Naive thymus-derived CD4-positive, alpha-beta T cell (primary cell): ENCODE measurements at regions of chr7 and their contacts with region 1.

Region 1: GRCh38 chr7:149125863-149126661 is at the start of gene ZNF425:
- DNase-seq: peak; percentile 87 to 98 (median 92)
- ATAC-seq: peak; percentile 98
- H3K4me3 ChIP-seq: peak within 1 kb of the TSS; percentile 99
- H3K4me3 Mint-ChIP-seq: peak within 1 kb of the TSS; percentile 91 to 100 (median 100)
- H3K27ac ChIP-seq: peak within 1 kb of the TSS; percentile 91
- H3K27ac Mint-ChIP-seq: peak within 1 kb of the TSS; percentile 90 to 100 (median 98)
- H3K4me1 ChIP-seq: no peaks in the 10 kb centered on the region
- H3K4me1 Mint-ChIP-seq: peaks cover 19 to 28% (median 22%) of the 10 kb centered on the region in 7 donors
- H3K27me3 ChIP-seq: no peaks in the 10 kb centered on the region
- H3K27me3 Mint-ChIP-seq: no peaks in the 10 kb centered on the region
- total RNA-seq, gene ZNF425: 0.61 to 4.9 (median 1.0) TPM

Region 2: DNA sequence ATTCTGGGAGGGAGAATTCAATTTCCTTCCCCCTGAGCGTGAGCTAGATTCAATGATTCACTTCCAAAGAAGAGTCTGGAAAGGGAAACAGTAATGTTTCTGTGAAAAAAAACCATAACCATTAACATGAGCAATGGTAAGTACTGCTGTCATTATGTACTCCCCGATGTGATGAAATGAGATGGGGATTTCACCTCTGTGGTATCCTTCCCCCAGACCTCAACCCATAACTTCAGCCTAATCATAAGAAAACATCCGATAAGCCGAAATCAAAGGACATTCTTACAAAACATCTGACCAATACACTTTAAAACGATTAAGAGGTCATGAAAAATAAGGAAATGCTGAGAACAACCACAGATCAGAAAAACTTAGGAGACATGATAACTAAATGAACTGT is 269.2 kb before region 1 on chr7:
- CTCF ChIA-PET with region 1: no interaction called
- POLR2A ChIA-PET with region 1: no interaction called
- intact Hi-C with region 1: no loop called
- DNase-seq: no peak
- ATAC-seq: peak; percentile 57
- H3K4me3 ChIP-seq: no peak overlapping the region
- H3K4me3 Mint-ChIP-seq: peak overlapping the region in 1 of 10 donors; percentile 60
- H3K27ac ChIP-seq: no peak overlapping the region
- H3K27ac Mint-ChIP-seq: peak overlapping the region in 1 of 9 donors; percentile 63
- H3K4me1 ChIP-seq: peaks cover 3 to 5% of the 10 kb centered on the region in 2 donors
- H3K4me1 Mint-ChIP-seq: peaks cover 8 to 45% (median 15%) of the 10 kb centered on the region in 7 donors
- H3K27me3 ChIP-seq: no peaks in the 10 kb centered on the region
- H3K27me3 Mint-ChIP-seq: no peaks in the 10 kb centered on the region

Region 3: GRCh38 chr7:148884299-148885022 is 241.6 kb before region 1 on chr7:
- CTCF ChIA-PET with region 1: no interaction called
- POLR2A ChIA-PET with region 1: interaction called, 3 read pairs
- intact Hi-C with region 1: loop called in 1 of 2 experiments (anchors 5 kb)
- DNase-seq: peak; percentile 89 to 96 (median 94)
- ATAC-seq: peak; percentile 94
- H3K4me3 ChIP-seq: peak overlapping the region; percentile 57
- H3K4me3 Mint-ChIP-seq: peak overlapping the region; percentile 85 to 98 (median 94)
- H3K27ac ChIP-seq: peak overlapping the region; percentile 97
- H3K27ac Mint-ChIP-seq: peak overlapping the region; percentile 89 to 98 (median 93)
- H3K4me1 ChIP-seq: peaks cover 6 to 7% of the 10 kb centered on the region in 2 donors
- H3K4me1 Mint-ChIP-seq: peaks cover 0 to 45% (median 29%) of the 10 kb centered on the region in 7 donors
- H3K27me3 ChIP-seq: no peaks in the 10 kb centered on the region
- H3K27me3 Mint-ChIP-seq: no peaks in the 10 kb centered on the region

Region 4: DNA sequence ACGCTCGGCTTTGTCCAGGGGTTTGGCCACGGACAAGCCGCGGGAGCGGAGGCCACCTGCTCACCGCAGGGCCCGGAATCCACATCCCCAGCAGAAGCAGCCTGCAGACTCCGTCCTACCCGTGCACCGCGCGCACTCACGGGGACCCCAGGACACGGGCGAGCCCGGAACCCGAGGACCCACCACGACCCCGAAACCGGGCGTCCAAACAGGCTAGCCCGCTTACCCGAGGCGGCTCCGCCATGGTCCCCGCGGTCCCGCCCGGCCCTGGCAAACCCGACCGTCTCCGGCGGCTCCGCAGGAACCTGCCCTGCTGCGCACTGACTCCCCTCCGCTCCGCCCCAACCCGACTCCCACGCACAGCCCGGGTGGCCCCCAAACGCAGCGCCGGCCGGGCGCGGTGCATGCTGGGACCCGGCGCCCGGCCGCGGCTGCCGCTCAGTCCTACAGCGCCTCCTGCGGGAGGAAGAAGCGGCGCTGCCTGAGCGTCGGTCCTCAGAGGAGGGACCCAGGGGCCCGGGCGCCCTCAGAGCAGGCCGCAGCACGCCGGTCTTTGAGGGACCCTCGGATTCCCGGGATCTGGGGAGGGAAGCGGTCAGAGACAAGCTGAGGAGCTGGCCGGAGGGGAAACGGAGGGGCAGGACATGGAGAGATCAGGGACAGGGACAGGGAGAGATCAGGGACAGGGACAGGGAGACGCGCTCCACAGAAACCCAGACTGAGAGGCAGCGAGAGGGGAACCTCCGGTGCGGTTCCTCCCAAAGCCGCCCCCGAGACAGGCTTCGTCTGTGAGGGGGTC is 35.5 kb before region 1 on chr7 and contains the start of gene ZNF786:
- CTCF ChIA-PET with region 1: interaction called, 3 read pairs
- POLR2A ChIA-PET with region 1: interaction called, 8 read pairs
- intact Hi-C with region 1: loop called (anchors 1 kb)
- DNase-seq: peak; percentile 87 to 97 (median 92)
- ATAC-seq: peak; percentile 95
- H3K4me3 ChIP-seq: peak within 1 kb of the TSS; percentile 93
- H3K4me3 Mint-ChIP-seq: peak within 1 kb of the TSS; percentile 91 to 100 (median 99)
- H3K27ac ChIP-seq: peak within 1 kb of the TSS; percentile 85
- H3K27ac Mint-ChIP-seq: peak within 1 kb of the TSS; percentile 93 to 100 (median 99)
- H3K4me1 ChIP-seq: peaks cover 8 to 9% of the 10 kb centered on the region in 2 donors
- H3K4me1 Mint-ChIP-seq: peaks cover 18 to 40% (median 35%) of the 10 kb centered on the region in 7 donors
- H3K27me3 ChIP-seq: no peaks in the 10 kb centered on the region
- H3K27me3 Mint-ChIP-seq: no peaks in the 10 kb centered on the region
- total RNA-seq, gene ZNF786: 5.4 to 22.0 (median 10.0) TPM

Region 5: DNA sequence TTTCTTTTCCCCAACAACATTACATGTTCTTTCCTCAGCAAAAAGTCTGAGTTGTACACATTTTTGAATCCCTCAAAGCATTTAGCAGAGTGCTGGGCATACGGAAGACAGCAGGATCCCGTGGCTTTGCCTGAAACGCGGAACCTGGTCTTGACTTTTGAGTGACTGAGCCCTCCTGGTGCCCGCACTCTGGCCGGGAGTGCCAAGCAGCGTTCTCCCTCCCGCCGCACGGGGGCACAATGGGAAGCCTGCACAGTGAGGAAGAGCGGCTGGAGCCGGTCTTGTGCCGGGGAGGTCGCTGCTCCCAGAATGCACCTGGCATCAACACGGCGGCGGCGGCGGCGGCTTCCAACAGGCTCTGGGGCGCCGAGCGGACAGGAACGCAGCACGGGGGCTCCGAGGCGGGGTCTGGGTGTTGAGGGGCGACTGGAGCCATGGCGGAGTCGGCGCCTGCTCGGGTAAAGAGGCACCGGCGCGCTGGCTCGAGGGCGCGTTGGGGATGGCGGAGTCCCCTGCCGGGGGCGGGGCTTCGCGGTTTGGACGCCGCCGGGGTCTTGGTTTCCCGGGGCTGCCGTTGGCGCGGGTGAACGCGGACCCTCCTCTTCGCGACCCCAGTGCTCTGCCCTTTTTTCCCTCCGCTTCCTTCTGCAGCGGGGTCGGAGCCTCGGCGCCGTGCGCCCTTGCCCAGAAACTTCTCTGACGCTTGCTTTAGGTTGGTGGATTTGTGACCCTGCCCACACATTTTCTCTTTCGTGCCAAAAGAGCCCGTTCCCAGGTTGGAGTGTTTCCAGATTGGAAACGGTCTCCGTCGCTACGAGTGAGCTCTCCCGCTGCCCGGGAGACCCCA is 113.5 kb after region 1 on chr7 and contains the start of gene ZNF212:
- CTCF ChIA-PET with region 1: no interaction called
- POLR2A ChIA-PET with region 1: no interaction called
- intact Hi-C with region 1: loop called in 1 of 2 experiments (anchors 1 kb)
- DNase-seq: peak; percentile 75 to 89 (median 84)
- ATAC-seq: peak; percentile 100
- H3K4me3 ChIP-seq: peak within 1 kb of the TSS; percentile 90
- H3K4me3 Mint-ChIP-seq: peak within 1 kb of the TSS; percentile 85 to 95 (median 92)
- H3K27ac ChIP-seq: peak within 1 kb of the TSS; percentile 76
- H3K27ac Mint-ChIP-seq: peak within 1 kb of the TSS; percentile 71 to 89 (median 87)
- H3K4me1 ChIP-seq: peaks cover 14 to 16% of the 10 kb centered on the region in 2 donors
- H3K4me1 Mint-ChIP-seq: peaks cover 23 to 43% (median 33%) of the 10 kb centered on the region in 7 donors
- H3K27me3 ChIP-seq: no peaks in the 10 kb centered on the region
- H3K27me3 Mint-ChIP-seq: peaks cover 0 to 6% (median 0%) of the 10 kb centered on the region in 5 donors
- total RNA-seq, gene ZNF212: 10.4 to 20.6 (median 13.3) TPM

Region 6: GRCh38 chr7:149284850-149285626 is 159.0 kb after region 1 on chr7:
- CTCF ChIA-PET with region 1: no interaction called
- POLR2A ChIA-PET with region 1: no interaction called
- intact Hi-C with region 1: loop called in 1 of 2 experiments (anchors 5 kb)
- DNase-seq: peak; percentile 96 to 99 (median 98)
- ATAC-seq: peak; percentile 98
- H3K4me3 ChIP-seq: peak overlapping the region; percentile 80
- H3K4me3 Mint-ChIP-seq: peak overlapping the region; percentile 79 to 97 (median 92)
- H3K27ac ChIP-seq: peak overlapping the region; percentile 72
- H3K27ac Mint-ChIP-seq: peak overlapping the region; percentile 76 to 96 (median 93)
- H3K4me1 ChIP-seq: peaks cover 30 to 36% of the 10 kb centered on the region in 2 donors
- H3K4me1 Mint-ChIP-seq: peaks cover 26 to 55% (median 46%) of the 10 kb centered on the region in 7 donors
- H3K27me3 ChIP-seq: no peaks in the 10 kb centered on the region
- H3K27me3 Mint-ChIP-seq: no peaks in the 10 kb centered on the region

Region 7: DNA sequence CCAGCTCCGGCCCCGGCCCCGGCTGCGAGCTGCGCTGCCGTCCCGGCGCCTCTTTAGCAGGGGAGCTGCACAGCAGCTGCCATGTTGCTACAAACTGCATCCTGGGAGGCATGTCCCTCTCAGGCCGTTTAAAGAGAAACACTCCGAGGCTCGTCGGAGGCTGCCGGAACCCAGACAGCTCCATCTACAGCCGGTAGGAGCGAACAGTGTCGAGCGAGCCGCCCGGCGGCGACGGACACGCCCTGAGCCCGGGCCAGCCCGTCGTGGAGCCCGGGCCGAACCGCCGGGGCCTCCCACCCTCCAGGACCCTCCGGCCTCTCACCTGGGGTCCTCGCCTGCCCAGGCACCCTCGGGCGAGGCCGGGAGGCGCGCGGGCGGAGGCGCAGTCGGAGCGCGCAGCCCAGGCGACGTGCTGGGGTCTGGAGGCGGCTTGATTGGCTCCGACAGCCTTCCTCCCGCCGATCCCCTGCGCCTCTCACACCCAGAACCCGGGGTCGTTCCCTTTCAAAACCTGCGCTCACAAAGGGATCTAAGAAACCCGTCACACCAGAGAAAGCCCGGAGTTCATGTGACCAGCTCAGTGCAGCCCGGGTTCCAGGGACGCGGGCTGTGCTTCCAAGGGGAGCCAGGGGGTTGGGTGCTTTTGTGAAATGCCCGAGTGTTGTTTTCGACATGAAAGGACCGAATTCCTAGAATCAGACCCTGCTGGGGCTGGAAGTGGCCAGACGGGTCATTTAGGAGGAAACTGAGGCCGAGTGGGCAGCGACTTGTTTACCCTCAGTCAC is 334.6 kb after region 1 on chr7 and contains the start of gene ZNF777:
- CTCF ChIA-PET with region 1: no interaction called
- POLR2A ChIA-PET with region 1: no interaction called
- intact Hi-C with region 1: loop called (anchors 1 kb)
- DNase-seq: peak; percentile 65 to 84 (median 80)
- ATAC-seq: peak; percentile 99
- H3K4me3 ChIP-seq: peak within 1 kb of the TSS; percentile 80
- H3K4me3 Mint-ChIP-seq: peak within 1 kb of the TSS; percentile 78 to 91 (median 87)
- H3K27ac ChIP-seq: peak within 1 kb of the TSS; percentile 72
- H3K27ac Mint-ChIP-seq: peak within 1 kb of the TSS; percentile 28 to 89 (median 76)
- H3K4me1 ChIP-seq: peaks cover 4 to 16% of the 10 kb centered on the region in 2 donors
- H3K4me1 Mint-ChIP-seq: peaks cover 13 to 46% (median 35%) of the 10 kb centered on the region in 7 donors
- H3K27me3 ChIP-seq: no peaks in the 10 kb centered on the region
- H3K27me3 Mint-ChIP-seq: peaks cover 4 to 29% (median 10%) of the 10 kb centered on the region in 5 donors
- total RNA-seq, gene ZNF777: 11.2 to 16.1 (median 14.3) TPM

Region 8: GRCh38 chr7:149714050-149714909 is 588.2 kb after region 1 on chr7:
- CTCF ChIA-PET with region 1: no interaction called
- POLR2A ChIA-PET with region 1: no interaction called
- intact Hi-C with region 1: loop called in 1 of 2 experiments (anchors 10 kb)
- DNase-seq: peak; percentile 68 to 89 (median 84)
- ATAC-seq: peak; percentile 99
- H3K4me3 ChIP-seq: peak overlapping the region; percentile 75
- H3K4me3 Mint-ChIP-seq: peak overlapping the region; percentile 71 to 87 (median 80)
- H3K27ac ChIP-seq: peak overlapping the region; percentile 72
- H3K27ac Mint-ChIP-seq: peak overlapping the region in 4 of 9 donors; percentile 5 to 72 (median 54)
- H3K4me1 ChIP-seq: peaks cover 10 to 13% of the 10 kb centered on the region in 2 donors
- H3K4me1 Mint-ChIP-seq: peaks cover 12 to 26% (median 19%) of the 10 kb centered on the region in 7 donors
- H3K27me3 ChIP-seq: no peaks in the 10 kb centered on the region
- H3K27me3 Mint-ChIP-seq: peaks cover 0 to 4% (median 0%) of the 10 kb centered on the region in 5 donors